GM10248 (cell line): ENCODE measurements at regions of chr1 and their contacts with region 1.

Region 1: DNA sequence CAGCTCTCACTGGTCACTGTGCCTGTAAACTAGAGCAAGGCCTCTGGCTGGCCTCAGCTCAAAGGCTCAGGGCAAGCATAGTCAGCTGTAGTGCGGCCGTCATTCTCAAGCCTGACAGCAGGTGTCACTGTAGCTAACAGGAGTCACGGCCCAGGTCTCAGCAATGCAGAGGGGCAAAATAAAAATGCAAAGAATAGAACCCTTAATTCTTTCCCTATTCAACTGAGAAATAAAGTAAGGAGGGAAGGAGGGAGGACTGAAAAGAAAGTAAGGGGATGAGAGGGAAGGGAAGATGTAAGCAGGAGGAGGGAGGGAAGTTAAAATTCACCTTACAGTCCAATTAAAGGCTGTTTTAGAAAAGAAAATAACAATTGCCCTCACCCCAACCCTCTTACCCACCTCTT is 106.1 kb downstream of the KIAA0319L start:
- DNase-seq: peak; percentile 70
- CTCF ChIP-seq: peak; percentile 92

Region 2: DNA sequence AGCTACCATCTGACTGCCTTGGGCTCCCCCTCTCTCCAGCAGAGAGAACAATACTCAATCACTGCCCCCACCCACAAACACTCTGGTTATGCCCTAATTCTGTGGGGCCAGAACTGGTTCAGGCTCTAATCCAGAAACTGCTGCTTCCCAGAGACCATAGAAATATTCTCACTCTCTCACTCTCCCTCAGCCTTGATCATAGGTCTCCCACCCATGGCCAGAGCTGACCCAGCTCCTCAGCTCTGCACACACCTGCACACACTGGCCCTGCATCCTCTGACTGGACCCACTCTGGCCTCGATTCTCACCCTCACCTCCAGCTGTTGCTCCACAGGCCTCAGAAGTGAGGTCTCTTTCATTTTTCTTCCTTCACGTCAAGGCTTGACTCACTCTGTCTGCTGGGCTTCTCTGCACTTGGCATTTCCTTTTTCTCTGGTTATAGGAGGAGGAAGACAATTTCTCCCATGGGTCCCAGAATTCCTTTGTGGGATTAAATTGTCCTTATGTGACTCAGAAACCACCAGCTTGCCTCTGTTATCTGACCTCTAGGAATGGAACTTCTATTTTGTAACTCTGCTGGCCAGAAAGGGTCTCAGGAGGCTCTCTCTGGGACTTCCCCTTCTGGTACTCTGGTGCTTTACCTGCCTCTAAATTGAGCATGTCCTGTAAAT is 403.8 kb before region 1 on chr1:
- CTCF ChIA-PET with region 1: no interaction called
- POLR2A ChIA-PET with region 1: no interaction called
- DNase-seq: no peak
- CTCF ChIP-seq: no peak

Region 3: GRCh38 chr1:35431173-35431599 is 19.9 kb before region 1 on chr1:
- CTCF ChIA-PET with region 1: interaction called, 110 read pairs
- POLR2A ChIA-PET with region 1: no interaction called
- DNase-seq: no peak
- CTCF ChIP-seq: no peak

Region 4: GRCh38 chr1:35505908-35506798 is 55.0 kb after region 1 on chr1:
- CTCF ChIA-PET with region 1: interaction called, 16 read pairs
- POLR2A ChIA-PET with region 1: no interaction called
- DNase-seq: peak; percentile 51
- CTCF ChIP-seq: no peak

Region 5: GRCh38 chr1:35544978-35545377 is 93.9 kb after region 1 on chr1:
- CTCF ChIA-PET with region 1: interaction called, 72 read pairs
- POLR2A ChIA-PET with region 1: no interaction called
- DNase-seq: peak; percentile 54
- CTCF ChIP-seq: peak; percentile 53

Region 6: GRCh38 chr1:35564037-35564883 is 113.1 kb after region 1 on chr1:
- CTCF ChIA-PET with region 1: interaction called, 184 read pairs
- POLR2A ChIA-PET with region 1: no interaction called
- DNase-seq: peak; percentile 86
- CTCF ChIP-seq: peak; percentile 83